AG04450 (cell line): ENCODE measurements at regions of chr15 and their contacts with region 1.

Region 1: GRCh38 chr15:23035964-23036566 is 3.3 kb downstream of the TUBGCP5 start:
- DNase-seq: no peak
- H3K4me3 ChIP-seq: no peak overlapping the region
- H3K27ac ChIP-seq: no peak overlapping the region
- H3K27me3 ChIP-seq: no peaks in the 10 kb centered on the region
- CTCF ChIP-seq: peak; percentile 70

Region 2: DNA sequence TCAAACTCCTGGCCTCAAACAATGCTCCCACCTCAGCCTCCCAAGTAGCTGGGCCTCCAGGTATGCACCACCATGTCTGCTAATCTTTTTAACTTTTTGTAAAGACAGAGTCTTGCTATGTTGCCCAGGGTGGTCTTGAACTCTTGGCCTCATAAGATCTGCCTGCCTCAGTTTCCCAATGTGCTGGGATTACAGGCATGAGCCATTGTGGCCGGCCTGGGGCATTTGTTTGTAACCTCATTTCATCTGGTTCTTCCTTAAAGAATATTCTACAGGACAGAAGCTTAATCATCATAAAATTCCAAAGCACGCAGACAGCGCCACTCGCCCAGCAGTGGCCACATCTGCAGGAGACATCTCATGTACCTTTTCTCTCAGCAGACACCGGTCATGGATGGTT is 32.3 kb before region 1 on chr15:
- CTCF ChIA-PET with region 1: interaction called, 11 read pairs
- POLR2A ChIA-PET with region 1: no interaction called
- DNase-seq: no peak
- H3K4me3 ChIP-seq: no peak overlapping the region
- H3K27ac ChIP-seq: no peak overlapping the region
- H3K27me3 ChIP-seq: no peaks in the 10 kb centered on the region
- CTCF ChIP-seq: no peak

Region 3: GRCh38 chr15:23014394-23015000 is 21.6 kb before region 1 on chr15:
- CTCF ChIA-PET with region 1: interaction called, 12 read pairs
- POLR2A ChIA-PET with region 1: no interaction called
- DNase-seq: no peak
- H3K4me3 ChIP-seq: no peak overlapping the region
- H3K27ac ChIP-seq: no peak overlapping the region
- H3K27me3 ChIP-seq: no peaks in the 10 kb centered on the region
- CTCF ChIP-seq: no peak